Activated CD4-positive, alpha-beta T cell treated with anti-CD3 and anti-CD28 coated beads for 36 hours (primary cell): ENCODE measurements at regions of chr17 and their contacts with region 1.

Region 1: GRCh38 chr17:48307814-48308411 is 122.1 kb downstream of the SKAP1 start:
- DNase-seq: peak; percentile 69
- ATAC-seq: peak; percentile 75
- H3K4me3 Mint-ChIP-seq: no peak overlapping the region
- H3K27ac Mint-ChIP-seq: no peak overlapping the region
- H3K4me1 Mint-ChIP-seq: peaks cover 15% of the 10 kb centered on the region
- H3K27me3 Mint-ChIP-seq: no peaks in the 10 kb centered on the region

Region 2: GRCh38 chr17:48295362-48296288 is 12.3 kb before region 1 on chr17:
- CTCF ChIA-PET with region 1: interaction called, 17 read pairs
- POLR2A ChIA-PET with region 1: no interaction called
- intact Hi-C with region 1: no loop called
- DNase-seq: no peak
- ATAC-seq: peak; percentile 68
- H3K4me3 Mint-ChIP-seq: peak overlapping the region; percentile 73
- H3K27ac Mint-ChIP-seq: peak overlapping the region; percentile 93
- H3K4me1 Mint-ChIP-seq: peaks cover 67% of the 10 kb centered on the region
- H3K27me3 Mint-ChIP-seq: no peaks in the 10 kb centered on the region

Region 3: DNA sequence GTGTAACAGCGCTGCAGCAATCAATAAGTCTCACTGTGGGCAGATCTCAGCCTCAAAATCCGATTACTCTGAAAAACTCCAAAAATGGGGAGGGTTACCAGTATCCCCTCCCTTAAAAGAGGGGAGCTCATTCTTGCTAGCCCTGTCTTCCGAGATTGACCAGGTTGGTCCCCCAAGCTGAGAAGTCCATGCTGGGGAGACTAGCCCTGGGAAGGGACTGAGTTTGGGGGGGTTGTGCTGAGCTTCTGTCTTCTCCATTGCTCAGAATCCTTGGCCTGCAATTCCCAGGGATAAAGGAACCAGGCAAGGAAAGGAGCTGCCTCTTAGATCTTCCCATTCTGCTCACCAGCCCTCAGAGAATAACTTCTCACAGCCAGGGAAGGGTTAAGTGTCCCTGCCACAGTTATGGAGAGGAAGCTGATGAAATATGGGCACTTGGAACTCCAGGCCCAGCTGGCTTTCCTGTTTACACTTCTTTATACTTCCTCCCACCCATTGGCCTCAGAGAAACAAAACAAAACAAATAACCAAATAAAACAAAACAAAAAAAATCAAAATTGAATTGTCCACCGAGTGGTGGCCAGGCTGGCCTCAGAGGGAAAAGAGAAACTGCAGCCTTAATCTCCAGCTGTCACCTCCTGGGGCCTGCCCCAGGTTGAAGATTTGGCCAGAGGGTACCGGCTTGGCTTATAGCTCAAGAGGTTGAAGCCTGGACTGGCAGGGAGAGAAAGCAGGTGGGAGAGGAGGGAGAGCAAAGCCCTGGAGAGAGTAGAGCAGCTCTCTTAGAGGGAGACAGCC is 279.6 kb after region 1 on chr17:
- CTCF ChIA-PET with region 1: interaction called, 20 read pairs
- POLR2A ChIA-PET with region 1: no interaction called
- intact Hi-C with region 1: no loop called
- DNase-seq: no peak
- ATAC-seq: no peak
- H3K4me3 Mint-ChIP-seq: no peak overlapping the region
- H3K27ac Mint-ChIP-seq: no peak overlapping the region
- H3K4me1 Mint-ChIP-seq: peaks cover 30% of the 10 kb centered on the region
- H3K27me3 Mint-ChIP-seq: peaks cover 89% of the 10 kb centered on the region